ENCODE measurements at regions of chr12 and their contacts with region 1.

Region 1: GRCh38 chr12:12983420-12984035 is 16.5 kb downstream of the HEBP1 start:
- DNase-seq: peak in 2 of 10 donors; percentile 47 to 58
- H3K4me3 ChIP-seq: peak overlapping the region in 1 of 59 donors; percentile 15
- H3K27ac ChIP-seq: peak overlapping the region in 58 of 59 donors; percentile 8 to 87 (median 74)
- H3K27me3 ChIP-seq: no peaks in the 10 kb centered on the region
- CTCF ChIP-seq: peak; percentile 37 to 92 (median 78)

Region 2: GRCh38 chr12:12147111-12147510 is 836.4 kb before region 1 on chr12:
- intact Hi-C with region 1: no loop called
- DNase-seq: no peak
- H3K4me3 ChIP-seq: no peak overlapping the region
- H3K27ac ChIP-seq: no peak overlapping the region
- H3K27me3 ChIP-seq: no peaks in the 10 kb centered on the region
- CTCF ChIP-seq: no peak

Region 3: GRCh38 chr12:12837025-12837872 is 146.3 kb before region 1 on chr12:
- intact Hi-C with region 1: loop called in 1 of 2 experiments (anchors 5 kb)
- DNase-seq: peak in 2 of 10 donors; percentile 4 to 7
- H3K4me3 ChIP-seq: no peak overlapping the region
- H3K27ac ChIP-seq: no peak overlapping the region
- H3K27me3 ChIP-seq: no peaks in the 10 kb centered on the region
- CTCF ChIP-seq: peak in 54 of 56 donors; percentile 25 to 66 (median 50)

Region 4: GRCh38 chr12:13023811-13024530 is 40.4 kb after region 1 on chr12:
- intact Hi-C with region 1: no loop called
- DNase-seq: no peak
- H3K4me3 ChIP-seq: no peak overlapping the region
- H3K27ac ChIP-seq: no peak overlapping the region
- H3K27me3 ChIP-seq: no peaks in the 10 kb centered on the region
- CTCF ChIP-seq: peak in 20 of 56 donors; percentile 6 to 52 (median 22)

Measured in dorsolateral prefrontal cortex (tissue), 120 donors.